ENCODE measurements at regions of chr3 and their contacts with region 1.

Region 1: DNA sequence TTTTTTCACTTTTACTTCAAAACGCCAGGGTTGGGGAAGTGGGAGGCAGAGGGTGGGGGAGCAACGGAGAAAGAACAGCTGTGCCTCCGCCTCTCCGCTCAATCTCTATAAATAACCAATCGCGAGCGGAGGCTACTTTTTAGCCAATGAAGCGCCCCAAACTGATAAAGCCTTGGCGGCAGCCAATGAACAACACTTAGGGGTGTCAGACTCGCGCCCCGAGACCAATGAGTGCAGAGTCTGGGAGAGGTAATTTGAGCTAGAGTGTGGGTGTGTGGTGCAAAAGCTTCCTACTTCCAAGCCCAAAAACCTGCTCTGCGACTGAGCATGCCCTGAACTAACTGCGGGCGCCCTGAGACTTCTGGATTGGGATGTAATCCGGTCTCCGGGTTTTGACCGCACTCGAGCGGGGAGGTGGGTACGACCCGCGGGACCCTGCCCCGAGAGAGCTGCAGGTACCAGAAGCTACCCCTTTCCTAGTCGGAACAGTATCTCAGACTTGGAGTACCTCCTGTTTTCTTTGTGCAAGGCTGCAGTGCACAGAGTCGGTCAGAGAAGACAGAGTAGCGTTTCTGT is 800 bp upstream of the RAP2B start:
- DNase-seq: peak; percentile 90 to 93 (median 92)
- H3K4me3 ChIP-seq: peak overlapping the region; percentile 82
- H3K27ac ChIP-seq: peak overlapping the region; percentile 1 to 91
- H3K4me1 ChIP-seq: no peaks in the 10 kb centered on the region
- H3K27me3 ChIP-seq: no peaks in the 10 kb centered on the region
- CTCF ChIP-seq: no peak
- EP300 ChIP-seq: no peak
- POLR2A ChIP-seq: peak; percentile 13

Region 2: GRCh38 chr3:153069598-153070510 is 91.4 kb before region 1 on chr3:
- intact Hi-C with region 1: no loop called
- DNase-seq: no peak
- H3K4me3 ChIP-seq: no peak overlapping the region
- H3K27ac ChIP-seq: no peak overlapping the region
- H3K4me1 ChIP-seq: no peaks in the 10 kb centered on the region
- H3K27me3 ChIP-seq: no peaks in the 10 kb centered on the region
- CTCF ChIP-seq: no peak
- EP300 ChIP-seq: no peak
- POLR2A ChIP-seq: no peak

Region 3: DNA sequence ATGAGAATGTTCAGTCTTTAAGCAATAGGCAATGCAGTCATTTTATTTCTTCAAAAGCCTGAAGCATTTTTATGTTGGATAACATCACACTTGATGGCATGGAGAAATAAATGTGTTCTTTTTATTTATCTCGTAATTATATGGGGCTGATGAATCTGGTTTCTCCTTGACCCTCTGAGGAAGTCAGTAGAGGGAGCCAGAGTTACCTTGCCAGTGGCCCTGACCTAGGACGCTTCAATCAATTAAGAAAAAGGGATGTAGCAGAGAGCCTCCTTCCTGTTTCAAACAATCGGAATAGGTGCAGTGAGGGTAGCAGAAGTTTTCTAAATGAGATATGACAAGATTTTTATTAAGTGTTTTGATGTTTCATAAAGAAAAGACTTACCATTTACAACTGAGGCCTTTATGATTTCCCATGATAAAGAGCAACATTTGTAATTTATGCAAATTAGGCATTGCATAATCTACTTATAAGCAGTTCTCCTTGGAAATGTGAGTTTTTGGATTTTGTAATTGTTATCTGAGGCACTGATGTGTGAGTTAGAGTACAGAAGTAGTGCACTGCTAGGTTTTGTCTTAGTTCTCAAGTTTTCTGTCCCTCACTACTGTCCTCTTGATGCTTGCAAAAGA is 129.9 kb after region 1 on chr3:
- intact Hi-C with region 1: loop called in 1 of 4 experiments (anchors 10 kb)
- DNase-seq: no peak
- H3K4me3 ChIP-seq: no peak overlapping the region
- H3K27ac ChIP-seq: no peak overlapping the region
- H3K4me1 ChIP-seq: no peaks in the 10 kb centered on the region
- H3K27me3 ChIP-seq: no peaks in the 10 kb centered on the region
- CTCF ChIP-seq: no peak
- EP300 ChIP-seq: no peak
- POLR2A ChIP-seq: no peak